H1 (cell line): ENCODE measurements at regions of chr17 and their contacts with region 1.

Region 1: DNA sequence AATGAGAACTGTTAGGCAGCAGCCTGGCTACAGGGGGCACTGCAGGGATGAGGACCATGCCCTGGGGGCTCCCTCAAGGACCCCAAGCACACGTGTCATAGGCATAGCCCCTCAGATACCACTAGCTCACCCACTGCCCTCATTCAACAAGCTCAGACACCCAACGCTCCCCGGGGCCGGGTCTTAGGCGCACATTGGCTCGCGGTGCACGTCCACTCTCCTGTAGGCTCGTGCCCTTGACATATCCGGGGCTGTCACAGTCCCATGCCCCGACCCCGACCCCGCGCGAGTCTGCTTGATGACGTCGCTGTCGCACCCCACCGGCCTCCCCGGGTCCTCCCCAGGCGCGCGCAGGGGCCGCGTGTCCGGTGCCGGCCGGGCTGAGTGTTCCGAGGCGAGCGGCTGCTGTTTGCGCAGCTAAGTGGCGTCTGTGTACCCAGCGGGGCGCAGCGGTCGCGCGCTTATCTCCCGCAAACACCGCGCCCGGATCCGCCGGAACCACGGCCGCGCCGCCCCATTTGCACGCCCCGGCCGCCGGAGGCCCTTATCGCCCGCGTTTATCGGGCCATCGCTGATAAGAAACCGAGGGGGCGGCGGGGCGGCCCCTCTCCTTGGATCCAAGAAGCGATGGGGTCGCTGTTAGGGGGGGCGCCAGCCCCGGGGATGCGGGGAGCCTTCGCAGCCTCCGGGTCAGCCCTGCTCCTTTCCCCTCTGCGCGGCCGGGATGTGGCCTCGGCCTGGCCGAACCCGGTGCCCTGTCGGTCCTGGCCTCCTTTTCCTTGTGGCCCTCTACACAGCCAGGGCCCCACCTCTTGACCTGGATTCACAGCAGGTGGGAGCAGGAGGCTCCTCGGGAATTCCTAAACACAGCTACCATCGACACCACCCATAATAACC is 20.7 kb upstream of the NAGS start:
- DNase-seq: peak in 1 of 2 experiments; percentile 82
- H3K4me3 ChIP-seq: peak overlapping the region; percentile 53 to 75 (median 60)
- H3K27ac ChIP-seq: no peak overlapping the region
- H3K4me1 ChIP-seq: peaks cover 0 to 4% (median 2%) of the 10 kb centered on the region in 4 experiments; a peak in 4 of 7 replicates
- H3K27me3 ChIP-seq: peaks cover 0 to 5% (median 4%) of the 10 kb centered on the region in 4 experiments; a peak in 3 of 7 replicates
- CTCF ChIP-seq: peak; percentile 63 to 85 (median 80)
- EP300 ChIP-seq: no peak
- POLR2A ChIP-seq: no peak
- RAD21 ChIP-seq: peak; percentile 24 to 53

Region 2: DNA sequence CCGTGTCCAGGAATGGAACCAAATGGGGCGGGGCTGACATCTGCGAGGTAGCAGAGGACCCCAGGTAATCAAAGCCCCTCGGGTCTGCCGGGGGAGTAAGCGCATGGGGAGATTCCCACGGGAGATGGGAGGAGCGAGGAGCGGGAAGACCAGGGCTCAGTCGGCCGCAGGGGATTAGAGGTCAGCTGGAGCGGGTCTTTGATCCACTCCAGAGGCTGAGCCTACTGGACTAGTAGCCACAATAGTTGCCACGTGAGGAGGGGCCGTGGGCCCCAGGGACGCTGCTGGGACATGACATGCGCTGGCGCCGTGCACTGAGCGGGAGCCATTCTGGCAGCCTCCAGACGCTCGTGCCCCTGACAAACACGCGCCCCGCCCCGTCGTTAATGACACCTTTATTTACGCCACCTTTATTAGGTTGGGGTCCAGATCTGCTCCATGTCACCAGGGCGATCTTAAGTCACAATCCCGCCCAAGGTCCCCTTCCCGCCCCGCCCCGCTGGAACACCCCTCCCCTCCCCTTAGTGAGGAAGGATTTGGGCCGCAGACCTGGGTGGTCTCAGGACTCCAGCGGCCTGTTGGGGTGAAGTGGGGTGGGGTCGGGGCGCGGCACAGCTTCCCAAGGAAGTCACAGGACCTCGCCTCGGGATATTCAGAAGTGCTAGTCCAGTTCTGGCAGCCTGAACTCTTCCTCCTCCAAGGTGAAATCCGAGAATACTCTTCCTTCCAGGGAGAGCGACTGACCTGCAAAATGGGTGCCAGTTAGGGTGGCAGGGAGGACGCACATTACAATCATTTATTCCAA is 56.5 kb before region 1 on chr17:
- CTCF ChIA-PET with region 1: interaction called, 10 read pairs
- POLR2A ChIA-PET with region 1: no interaction called
- DNase-seq: no peak
- H3K4me3 ChIP-seq: peak overlapping the region; percentile 10 to 55 (median 34); a peak in 5 of 8 replicates
- H3K27ac ChIP-seq: no peak overlapping the region
- H3K4me1 ChIP-seq: peaks cover 0 to 7% (median 0%) of the 10 kb centered on the region in 4 experiments; a peak in 1 of 7 replicates
- H3K27me3 ChIP-seq: peaks cover 3 to 28% (median 15%) of the 10 kb centered on the region in 4 experiments
- CTCF ChIP-seq: no peak
- EP300 ChIP-seq: no peak
- POLR2A ChIP-seq: no peak
- RAD21 ChIP-seq: no peak

Region 3: GRCh38 chr17:43946069-43946696 is 37.6 kb before region 1 on chr17:
- CTCF ChIA-PET with region 1: interaction called, 416 read pairs
- POLR2A ChIA-PET with region 1: interaction called, 9 read pairs
- DNase-seq: no peak
- H3K4me3 ChIP-seq: no peak overlapping the region
- H3K27ac ChIP-seq: no peak overlapping the region
- H3K4me1 ChIP-seq: peaks cover 0 to 2% (median 0%) of the 10 kb centered on the region in 4 experiments; a peak in 2 of 7 replicates
- H3K27me3 ChIP-seq: no peaks in the 10 kb centered on the region; a peak in 2 of 7 replicates
- CTCF ChIP-seq: peak; percentile 22 to 29 (median 24); a peak in 3 of 4 replicates
- EP300 ChIP-seq: no peak
- POLR2A ChIP-seq: no peak
- RAD21 ChIP-seq: peak; percentile 21 to 46; a peak in 2 of 4 replicates

Region 4: DNA sequence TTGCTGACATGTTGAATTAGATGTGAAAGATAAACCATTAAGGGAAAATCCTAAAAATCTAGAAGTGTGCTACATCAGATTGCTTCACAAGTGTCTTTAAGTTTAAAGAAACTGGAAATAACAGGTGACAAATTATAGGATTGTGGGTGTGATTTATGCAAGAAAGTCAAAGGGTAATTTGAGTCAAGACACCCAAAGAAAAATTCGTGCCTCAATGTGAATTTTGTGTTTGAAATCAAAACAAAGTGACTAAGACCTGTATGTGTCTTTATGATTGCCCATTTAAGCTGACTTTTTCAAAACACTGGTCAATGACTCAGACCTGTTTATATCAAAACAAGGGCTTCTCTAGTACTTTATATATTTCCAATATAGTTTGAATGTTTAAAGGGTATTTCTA is 24.8 kb before region 1 on chr17:
- CTCF ChIA-PET with region 1: interaction called, 26 read pairs
- POLR2A ChIA-PET with region 1: no interaction called
- DNase-seq: no peak
- H3K4me3 ChIP-seq: no peak overlapping the region
- H3K27ac ChIP-seq: no peak overlapping the region
- H3K4me1 ChIP-seq: peaks cover 0 to 1% (median 0%) of the 10 kb centered on the region in 4 experiments; a peak in 1 of 7 replicates
- H3K27me3 ChIP-seq: peaks cover 0 to 7% (median 7%) of the 10 kb centered on the region in 4 experiments; a peak in 4 of 7 replicates
- CTCF ChIP-seq: no peak
- EP300 ChIP-seq: no peak
- POLR2A ChIP-seq: no peak
- RAD21 ChIP-seq: no peak

Region 5: DNA sequence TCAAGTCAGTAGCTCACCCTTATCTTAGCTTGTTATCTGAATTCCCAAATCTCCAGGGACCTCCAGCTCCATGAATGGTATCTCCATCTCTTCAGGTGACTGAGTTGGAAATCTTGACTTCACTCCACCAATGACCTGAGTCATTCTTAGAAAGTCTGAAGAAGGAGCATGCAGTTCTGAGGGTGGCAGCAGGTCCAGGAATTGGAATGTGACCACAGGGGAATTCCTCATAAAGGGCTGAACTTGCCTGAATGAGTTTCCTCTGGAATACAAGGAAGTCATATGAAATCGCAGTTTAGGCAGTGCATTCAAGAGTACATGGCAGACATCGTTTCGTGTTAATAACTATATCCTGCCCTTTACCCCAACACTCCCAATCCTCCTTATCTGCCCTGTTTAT is 17.5 kb before region 1 on chr17:
- CTCF ChIA-PET with region 1: interaction called, 26 read pairs
- POLR2A ChIA-PET with region 1: no interaction called
- DNase-seq: no peak
- H3K4me3 ChIP-seq: no peak overlapping the region
- H3K27ac ChIP-seq: no peak overlapping the region
- H3K4me1 ChIP-seq: no peaks in the 10 kb centered on the region
- H3K27me3 ChIP-seq: 0 out of 7 replicates have a peak, but pooled peaks cover 0 to 2% (median 0%) of the 10 kb centered on the region in 4 experiments
- CTCF ChIP-seq: no peak
- EP300 ChIP-seq: no peak
- POLR2A ChIP-seq: no peak
- RAD21 ChIP-seq: no peak

Region 6: GRCh38 chr17:43994272-43995149 is 10.7 kb after region 1 on chr17:
- CTCF ChIA-PET with region 1: interaction called, 32 read pairs
- POLR2A ChIA-PET with region 1: interaction called, 5 read pairs
- DNase-seq: peak in 1 of 2 experiments; percentile 92
- H3K4me3 ChIP-seq: peak overlapping the region; percentile 12 to 67 (median 42)
- H3K27ac ChIP-seq: no peak overlapping the region
- H3K4me1 ChIP-seq: peaks cover 0 to 2% (median 0%) of the 10 kb centered on the region in 4 experiments; a peak in 1 of 7 replicates
- H3K27me3 ChIP-seq: peaks cover 0 to 9% (median 4%) of the 10 kb centered on the region in 4 experiments; a peak in 5 of 7 replicates
- CTCF ChIP-seq: peak; percentile 81 to 97 (median 83)
- EP300 ChIP-seq: no peak
- POLR2A ChIP-seq: no peak
- RAD21 ChIP-seq: peak; percentile 91 to 94

Region 7: DNA sequence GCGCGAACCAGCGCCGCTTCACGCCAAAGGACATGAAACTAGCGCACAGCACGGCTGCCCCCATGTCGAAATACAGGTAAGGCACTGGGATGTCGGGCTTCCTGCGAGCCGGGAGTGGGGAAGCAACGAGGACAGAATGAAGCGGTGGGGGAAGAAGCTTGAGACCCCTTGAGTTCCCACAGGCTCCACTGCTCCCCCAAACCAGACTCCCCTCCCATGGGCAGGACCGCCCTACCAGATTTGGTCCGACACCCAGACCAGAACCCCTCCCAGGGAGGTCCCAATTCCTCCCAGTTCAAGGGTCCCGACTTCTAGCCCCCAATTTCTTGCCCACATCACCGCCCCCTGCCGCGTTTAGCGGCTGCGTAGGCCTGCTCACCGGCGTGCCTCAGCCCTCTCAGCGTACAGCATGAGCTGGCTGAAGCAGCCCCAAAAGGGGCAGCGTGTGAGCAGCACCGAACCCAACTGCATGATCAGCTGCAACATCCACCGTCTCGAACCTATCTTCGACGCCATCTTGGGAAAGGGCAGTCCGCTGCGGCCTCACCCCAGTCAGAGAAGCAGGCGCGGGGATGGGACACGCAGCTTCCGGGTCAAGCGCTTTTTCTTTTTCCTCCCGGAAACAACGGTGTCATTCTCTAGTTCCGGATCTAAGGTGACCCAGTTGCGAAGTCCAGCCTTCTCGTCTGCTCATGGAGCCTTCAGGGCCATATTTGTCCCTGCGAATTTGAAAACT is 30.8 kb after region 1 on chr17 and contains the start of gene TMEM101:
- CTCF ChIA-PET with region 1: no interaction called
- POLR2A ChIA-PET with region 1: no interaction called
- DNase-seq: peak; percentile 82 to 86
- H3K4me3 ChIP-seq: peak within 1 kb of the TSS; percentile 84 to 91 (median 88)
- H3K27ac ChIP-seq: peak within 1 kb of the TSS; percentile 90
- H3K4me1 ChIP-seq: peaks cover 0 to 2% (median 0%) of the 10 kb centered on the region in 4 experiments; a peak in 3 of 7 replicates
- H3K27me3 ChIP-seq: no peaks in the 10 kb centered on the region
- CTCF ChIP-seq: no peak
- EP300 ChIP-seq: peak in 1 of 2 experiments; percentile 65; a peak in 1 of 3 replicates
- POLR2A ChIP-seq: peak in 1 of 2 experiments; percentile 86; a peak in 2 of 3 replicates
- RAD21 ChIP-seq: peak in 1 of 2 experiments; percentile 20; a peak in 1 of 4 replicates
- total RNA-seq, gene TMEM101: 16.1 and 20.9 TPM in 2 replicates